A549 (cell line): ENCODE measurements at regions of chr19 and their contacts with region 1.

Region 1: DNA sequence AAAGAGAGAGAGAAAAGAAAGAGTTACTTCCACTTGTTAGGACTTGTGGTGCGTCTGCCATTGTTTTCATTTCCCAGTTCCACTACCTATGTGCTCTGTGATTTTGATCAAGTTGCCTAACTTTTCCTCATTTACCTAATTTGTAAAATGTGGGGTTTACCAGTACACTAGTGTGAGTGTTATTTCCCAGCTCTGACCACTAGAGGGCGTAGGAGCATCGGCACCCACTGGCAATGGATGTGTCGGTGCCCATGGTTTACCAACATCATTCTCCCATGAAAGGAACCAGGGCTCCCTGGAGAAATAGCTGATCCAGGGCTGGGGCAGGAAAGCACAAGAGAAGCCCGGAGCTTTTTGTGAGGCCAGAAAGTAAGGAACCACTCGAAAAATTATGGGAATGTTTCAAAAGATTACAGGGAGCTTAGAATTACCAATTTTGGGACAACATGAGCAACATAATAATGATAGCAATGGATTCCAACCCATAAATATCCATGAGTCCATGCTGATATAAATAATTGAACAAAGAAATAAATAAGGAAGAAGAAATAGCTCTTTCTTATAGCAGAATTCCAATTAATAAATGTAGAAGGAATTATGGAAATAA is 15.1 kb upstream of the CEACAM4 start:
- DNase-seq: peak; percentile 78 to 99
- ATAC-seq: peak; percentile 94 to 99
- H3K4me3 ChIP-seq: no peak overlapping the region
- H3K27ac ChIP-seq: no peak overlapping the region
- H3K4me1 ChIP-seq: no peaks in the 10 kb centered on the region
- CTCF ChIP-seq: peak; percentile 99
- EP300 ChIP-seq: no peak
- POLR2A ChIP-seq: no peak
- RAD21 ChIP-seq: peak; percentile 95 to 98

Region 2: DNA sequence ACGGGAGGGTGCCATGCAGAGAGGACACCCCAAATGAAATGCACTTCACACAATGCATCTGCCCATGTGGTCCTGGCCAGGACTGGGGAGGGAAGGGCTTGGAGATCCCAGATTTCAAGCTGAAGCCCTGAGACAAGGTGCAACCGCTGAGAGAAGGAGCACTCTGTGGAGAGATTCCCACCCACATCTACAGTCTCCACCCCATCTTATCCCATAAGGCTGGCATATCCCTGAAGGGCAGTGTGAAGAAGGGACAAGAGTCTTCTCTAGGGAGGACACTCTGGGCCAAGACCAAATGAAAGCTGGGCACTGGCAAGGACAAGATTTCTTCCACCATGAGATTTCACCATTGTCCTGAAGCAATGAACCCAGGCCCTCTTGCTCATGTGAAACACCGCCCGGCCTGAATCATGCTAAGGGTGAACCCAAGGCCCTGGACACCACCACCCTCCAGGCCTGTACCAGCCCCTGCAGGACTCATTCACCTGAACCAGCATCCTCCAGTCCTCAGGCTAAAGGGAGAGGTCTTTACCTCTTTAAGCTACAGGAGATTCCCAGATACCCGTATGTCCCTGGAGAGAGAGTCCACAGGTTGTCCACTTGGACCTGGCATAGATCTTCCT is 35.7 kb before region 1 on chr19:
- CTCF ChIA-PET with region 1: interaction called, 17 read pairs
- POLR2A ChIA-PET with region 1: no interaction called
- DNase-seq: no peak
- ATAC-seq: no peak; a peak in 1 of 6 replicates
- H3K4me3 ChIP-seq: no peak overlapping the region
- H3K27ac ChIP-seq: no peak overlapping the region
- H3K4me1 ChIP-seq: no peaks in the 10 kb centered on the region
- CTCF ChIP-seq: no peak
- EP300 ChIP-seq: no peak
- POLR2A ChIP-seq: no peak
- RAD21 ChIP-seq: no peak

Region 3: DNA sequence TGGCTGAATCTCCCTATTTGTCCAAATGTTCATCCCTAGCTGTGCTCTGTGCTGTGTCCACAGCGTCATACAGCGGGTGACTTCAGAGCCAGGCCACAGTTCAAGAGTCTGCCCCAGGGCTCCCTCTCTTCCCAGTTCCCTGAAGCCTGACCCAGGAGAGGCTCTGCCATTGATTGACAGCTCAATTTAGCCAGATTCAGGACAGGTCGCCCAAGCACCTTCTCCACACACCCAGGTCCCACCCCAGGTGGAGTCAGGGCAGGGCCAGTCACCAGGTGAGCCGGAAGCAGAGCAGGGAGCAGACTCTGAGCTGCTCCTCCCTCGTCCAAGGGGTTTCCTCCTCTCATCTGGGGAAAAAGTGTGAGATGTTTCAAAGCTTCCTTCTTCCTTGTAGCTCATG is 40.4 kb after region 1 on chr19:
- CTCF ChIA-PET with region 1: interaction called, 151 read pairs
- POLR2A ChIA-PET with region 1: no interaction called
- DNase-seq: no peak
- ATAC-seq: peak in 1 of 2 experiments; percentile 31; a peak in 2 of 6 replicates
- H3K4me3 ChIP-seq: no peak overlapping the region
- H3K27ac ChIP-seq: no peak overlapping the region
- H3K4me1 ChIP-seq: no peaks in the 10 kb centered on the region
- CTCF ChIP-seq: no peak
- EP300 ChIP-seq: no peak
- POLR2A ChIP-seq: no peak
- RAD21 ChIP-seq: no peak

Region 4: GRCh38 chr19:41720103-41720502 is 78.1 kb after region 1 on chr19:
- CTCF ChIA-PET with region 1: interaction called, 20 read pairs
- POLR2A ChIA-PET with region 1: no interaction called
- DNase-seq: no peak
- ATAC-seq: no peak
- H3K4me3 ChIP-seq: no peak overlapping the region
- H3K27ac ChIP-seq: no peak overlapping the region
- H3K4me1 ChIP-seq: no peaks in the 10 kb centered on the region
- CTCF ChIP-seq: no peak
- EP300 ChIP-seq: no peak
- POLR2A ChIP-seq: no peak
- RAD21 ChIP-seq: no peak

Region 5: DNA sequence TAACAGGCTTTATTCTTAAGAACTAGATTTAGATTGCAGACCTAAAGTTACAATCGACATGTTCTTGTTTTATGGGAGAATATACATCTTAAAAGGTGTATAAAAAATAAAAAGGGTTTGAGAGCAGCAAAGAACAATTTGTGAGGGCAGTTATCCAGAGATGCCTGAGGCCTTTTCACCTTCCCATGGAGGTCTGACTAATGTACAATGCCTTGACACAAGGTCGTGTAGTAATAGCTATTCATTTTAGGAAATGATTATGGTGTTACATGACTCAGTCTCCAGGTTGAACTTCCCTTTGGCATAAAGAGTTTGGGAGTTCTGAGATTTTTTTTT is 133.3 kb after region 1 on chr19:
- CTCF ChIA-PET with region 1: interaction called, 27 read pairs
- POLR2A ChIA-PET with region 1: no interaction called
- DNase-seq: peak in 1 of 2 experiments; percentile 50
- ATAC-seq: no peak
- H3K4me3 ChIP-seq: no peak overlapping the region
- H3K27ac ChIP-seq: no peak overlapping the region
- H3K4me1 ChIP-seq: peaks cover 5% of the 10 kb centered on the region; the same call in 2 of the 3 replicates
- CTCF ChIP-seq: no peak
- EP300 ChIP-seq: no peak
- POLR2A ChIP-seq: no peak
- RAD21 ChIP-seq: no peak

Region 6: GRCh38 chr19:41821003-41821735 is 179.2 kb after region 1 on chr19:
- CTCF ChIA-PET with region 1: interaction called, 37 read pairs
- POLR2A ChIA-PET with region 1: no interaction called
- DNase-seq: peak; percentile 82 to 94
- ATAC-seq: peak; percentile 92 to 96
- H3K4me3 ChIP-seq: no peak overlapping the region
- H3K27ac ChIP-seq: no peak overlapping the region
- H3K4me1 ChIP-seq: no peaks in the 10 kb centered on the region
- CTCF ChIP-seq: peak; percentile 91
- EP300 ChIP-seq: no peak
- POLR2A ChIP-seq: no peak
- RAD21 ChIP-seq: peak; percentile 86 to 96